Heart left ventricle (tissue), 16 donors: ENCODE measurements at regions of chr9 and their contacts with region 1.

Region 1: DNA sequence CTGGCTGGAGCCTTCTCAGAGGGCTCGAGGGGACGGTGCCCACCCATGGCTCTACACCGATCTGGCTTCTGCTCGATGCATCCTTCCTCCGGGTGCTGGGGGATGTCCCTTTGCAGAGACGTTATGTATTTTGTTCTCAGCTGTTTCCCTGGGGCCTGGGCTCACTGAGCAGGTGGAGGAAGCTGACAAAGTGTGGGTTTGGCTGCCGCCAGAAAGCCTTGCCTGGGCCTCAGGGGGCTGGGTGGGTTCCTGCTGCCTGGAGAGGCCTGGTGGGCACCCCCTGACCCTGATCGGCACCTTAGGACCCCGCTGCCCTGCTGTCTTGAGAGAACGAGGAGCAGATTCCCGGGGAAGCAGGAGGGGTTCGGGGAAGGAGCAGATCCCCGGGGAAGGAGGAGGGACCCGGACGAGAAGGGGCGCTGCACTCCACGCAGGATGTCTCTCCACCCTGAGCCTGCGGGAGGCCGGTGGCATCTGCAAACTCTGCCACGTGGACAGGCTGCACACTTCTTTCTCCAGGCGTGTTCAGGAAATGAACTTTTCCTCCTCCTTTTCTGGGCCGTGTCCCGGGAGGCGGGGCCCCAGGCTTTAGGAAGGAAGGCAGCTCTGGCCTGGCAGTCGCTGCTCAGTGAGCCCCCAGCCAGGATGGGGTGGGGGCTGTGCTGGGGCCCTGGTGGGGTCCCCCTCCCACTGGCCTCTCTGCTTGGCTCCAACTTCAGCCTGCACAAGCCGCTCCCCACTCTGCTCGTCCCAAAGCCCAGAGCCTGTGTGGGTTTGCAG is 148.9 kb downstream of the RXRA start:
- DNase-seq: peak; percentile 78 to 84 (median 83)
- ATAC-seq: peak; percentile 48 to 91 (median 68)
- H3K4me3 ChIP-seq: no peak overlapping the region
- H3K27ac ChIP-seq: peak overlapping the region in 11 of 12 donors; percentile 42 to 76 (median 65)
- H3K4me1 ChIP-seq: peaks cover 0 to 42% (median 23%) of the 10 kb centered on the region in 12 donors
- H3K27me3 ChIP-seq: no peaks in the 10 kb centered on the region
- CTCF ChIP-seq: no peak
- POLR2A ChIP-seq: no peak

Region 2: DNA sequence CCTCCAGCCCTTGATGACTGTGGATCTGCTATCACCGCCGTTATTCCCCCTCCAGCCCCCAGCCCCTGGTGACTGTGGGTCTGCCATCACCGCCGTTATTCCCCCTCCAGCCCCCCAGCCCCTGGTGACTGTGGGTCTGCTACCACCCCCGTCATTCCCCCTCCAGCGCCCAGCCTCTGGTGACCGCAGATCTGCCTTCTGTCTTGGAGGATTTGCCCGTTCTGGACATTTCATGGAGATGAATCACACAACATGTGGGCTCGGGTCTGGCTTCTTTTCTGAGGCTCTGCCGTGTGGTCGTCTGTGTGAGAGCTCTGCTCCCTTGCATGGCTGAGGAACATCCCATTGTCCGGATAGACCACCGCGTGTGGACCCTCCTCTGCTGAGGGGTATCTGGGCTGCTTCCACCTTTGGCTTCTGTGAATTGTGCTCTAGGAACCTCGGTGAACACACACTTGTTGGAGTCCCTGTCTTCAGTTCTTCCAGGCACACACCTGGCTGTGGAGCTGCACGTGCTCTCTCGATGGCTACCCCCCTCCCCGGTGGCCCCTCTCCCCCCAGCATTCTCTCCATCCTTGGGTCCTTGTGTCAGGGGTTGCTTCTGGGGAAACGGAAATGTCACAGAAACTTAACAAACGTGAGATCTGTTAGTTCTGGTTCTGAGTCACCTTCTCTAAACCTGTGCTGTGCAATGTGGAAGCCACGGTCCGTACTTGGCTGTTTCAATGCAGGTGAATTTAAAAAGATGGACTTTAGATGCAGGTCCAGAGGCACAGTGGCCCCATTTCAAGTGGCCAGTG is 61.1 kb after region 1 on chr9:
- intact Hi-C with region 1: loop called in 1 of 10 experiments (anchors 10 kb)
- DNase-seq: peak in 2 of 5 donors; percentile 4 to 42
- ATAC-seq: no peak
- H3K4me3 ChIP-seq: no peak overlapping the region
- H3K27ac ChIP-seq: no peak overlapping the region
- H3K4me1 ChIP-seq: peaks cover 0 to 18% (median 0%) of the 10 kb centered on the region in 12 donors
- H3K27me3 ChIP-seq: peaks cover 0 to 10% (median 0%) of the 10 kb centered on the region in 9 donors
- CTCF ChIP-seq: no peak
- POLR2A ChIP-seq: no peak